GM23248 (cell line): ENCODE measurements at regions of chr13 and their contacts with region 1.

Region 1: GRCh38 chr13:33931397-33932311 is 113.7 kb downstream of the RFC3 start:
- DNase-seq: peak; percentile 74
- H3K4me3 ChIP-seq: no peak overlapping the region
- H3K27ac ChIP-seq: no peak overlapping the region
- H3K4me1 ChIP-seq: no peaks in the 10 kb centered on the region
- H3K27me3 ChIP-seq: no peaks in the 10 kb centered on the region

Region 2: GRCh38 chr13:33139184-33139583 is 792.5 kb before region 1 on chr13:
- in situ Hi-C with region 1: no loop called
- DNase-seq: no peak
- H3K4me3 ChIP-seq: no peak overlapping the region
- H3K27ac ChIP-seq: no peak overlapping the region
- H3K4me1 ChIP-seq: no peaks in the 10 kb centered on the region
- H3K27me3 ChIP-seq: no peaks in the 10 kb centered on the region

Region 3: GRCh38 chr13:34076943-34077703 is 145.5 kb after region 1 on chr13:
- in situ Hi-C with region 1: loop called (anchors 10 kb)
- DNase-seq: peak; percentile 68
- H3K4me3 ChIP-seq: 0 out of 2 replicates have a peak overlapping the region, but pooled peaks have one; percentile 12
- H3K27ac ChIP-seq: peak overlapping the region; percentile 18
- H3K4me1 ChIP-seq: peaks cover 17% of the 10 kb centered on the region
- H3K27me3 ChIP-seq: no peaks in the 10 kb centered on the region

Region 4: DNA sequence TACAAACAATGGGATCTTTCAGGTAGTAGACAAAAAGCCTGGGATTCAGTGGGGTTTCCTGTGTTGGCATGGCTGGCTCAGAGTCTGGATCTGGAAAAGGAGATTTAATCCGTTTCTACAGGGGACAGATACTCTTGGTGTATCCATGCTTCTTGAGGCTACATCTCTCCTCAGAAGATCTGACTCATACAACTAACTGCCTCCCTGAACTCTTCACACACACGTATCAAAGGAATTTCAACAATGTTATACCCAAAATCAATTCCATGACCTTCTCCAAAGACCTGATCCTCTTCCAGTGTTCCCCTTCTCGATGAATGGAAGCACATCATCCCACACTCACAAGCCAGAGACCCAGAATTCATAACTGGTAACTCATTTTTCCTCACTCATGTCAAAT is 575.1 kb after region 1 on chr13:
- in situ Hi-C with region 1: no loop called
- DNase-seq: peak; percentile 5
- H3K4me3 ChIP-seq: no peak overlapping the region
- H3K27ac ChIP-seq: no peak overlapping the region
- H3K4me1 ChIP-seq: no peaks in the 10 kb centered on the region
- H3K27me3 ChIP-seq: no peaks in the 10 kb centered on the region